Gastrocnemius medialis (tissue), 4 donors: ENCODE measurements at regions of chr3 and their contacts with region 1.

Region 1: GRCh38 chr3:121592856-121593702 is at the start of gene FBXO40:
- DNase-seq: peak; percentile 79 to 91
- ATAC-seq: peak; percentile 88 to 90
- H3K4me3 ChIP-seq: peak within 1 kb of the TSS; percentile 47 to 53 (median 52)
- H3K27ac ChIP-seq: peak within 1 kb of the TSS; percentile 87 to 95 (median 94)
- H3K4me1 ChIP-seq: peaks cover 39 to 40% of the 10 kb centered on the region in 2 donors
- H3K27me3 ChIP-seq: no peaks in the 10 kb centered on the region
- CTCF ChIP-seq: no peak
- POLR2A ChIP-seq: peak; percentile 27 to 72
- total RNA-seq, gene FBXO40: 7.2 to 40.8 (median 28.7) TPM

Region 2: DNA sequence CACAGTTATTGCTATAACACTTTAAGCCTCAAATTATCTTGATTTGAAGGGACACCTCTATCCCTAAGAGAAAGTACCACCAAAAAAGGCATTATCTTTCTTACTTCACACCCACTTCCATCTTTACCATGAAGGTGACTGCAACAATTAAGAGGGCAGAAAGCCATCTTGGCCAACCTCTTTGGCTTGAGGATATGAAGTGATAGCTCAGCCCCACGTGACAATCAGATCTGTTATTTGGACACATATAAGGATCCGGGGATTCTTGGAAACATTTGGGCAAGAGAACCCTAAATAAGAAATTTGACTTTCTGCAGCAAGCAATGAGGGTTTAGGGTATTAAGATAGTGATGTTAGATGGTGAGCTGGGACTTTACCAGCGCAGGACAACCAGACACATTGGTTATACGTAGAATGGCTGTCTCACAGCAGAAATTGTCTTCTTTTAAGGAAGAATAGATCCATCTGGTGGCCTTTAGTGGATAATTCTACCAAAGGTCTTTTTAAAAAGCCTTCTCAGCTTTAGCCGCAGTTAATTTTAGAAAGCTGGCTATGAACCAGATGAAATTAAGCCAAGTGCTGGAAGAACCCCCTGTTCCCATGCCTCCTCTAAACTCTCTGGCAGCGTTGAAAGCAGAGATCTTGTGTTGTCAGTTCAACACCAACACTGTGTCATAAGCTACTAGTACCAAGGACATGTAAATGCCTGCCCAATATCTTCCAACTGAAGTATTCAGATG is 55.3 kb after region 1 on chr3:
- in situ Hi-C with region 1: no loop called
- intact Hi-C with region 1: loop called (anchors 2 kb)
- DNase-seq: peak; percentile 66 to 74
- ATAC-seq: peak; percentile 99
- H3K4me3 ChIP-seq: peak overlapping the region in 2 of 4 donors; percentile 16 to 21
- H3K27ac ChIP-seq: peak overlapping the region; percentile 83 to 87 (median 84)
- H3K4me1 ChIP-seq: peaks cover 17 to 21% of the 10 kb centered on the region in 2 donors
- H3K27me3 ChIP-seq: no peaks in the 10 kb centered on the region
- CTCF ChIP-seq: peak in 2 of 5 experiments; percentile 13 to 19
- POLR2A ChIP-seq: no peak

Region 3: DNA sequence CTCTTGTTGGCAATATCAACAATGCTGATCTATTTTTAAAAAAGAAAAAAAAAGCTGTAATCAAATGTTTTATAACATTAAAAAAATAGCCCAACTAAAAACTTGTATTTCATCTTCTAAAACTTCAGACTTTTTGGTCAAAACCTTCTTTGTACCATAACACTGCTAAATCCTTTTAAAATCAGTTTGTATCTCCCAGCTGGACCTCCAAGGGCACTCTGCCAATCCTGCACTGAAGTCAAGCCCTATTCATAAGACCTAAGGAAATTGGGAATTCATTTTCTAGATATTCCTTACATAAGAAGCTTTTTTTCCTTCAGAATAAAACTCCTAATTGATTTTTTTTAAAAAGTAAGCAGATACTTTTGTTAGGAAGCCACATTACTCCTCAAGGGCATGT is 105.8 kb after region 1 on chr3:
- in situ Hi-C with region 1: no loop called
- intact Hi-C with region 1: no loop called
- DNase-seq: no peak
- ATAC-seq: no peak
- H3K4me3 ChIP-seq: no peak overlapping the region
- H3K27ac ChIP-seq: peak overlapping the region in 1 of 4 donors; percentile 11
- H3K4me1 ChIP-seq: peaks cover 10 to 19% of the 10 kb centered on the region in 2 donors
- H3K27me3 ChIP-seq: no peaks in the 10 kb centered on the region
- CTCF ChIP-seq: no peak
- POLR2A ChIP-seq: no peak

Region 4: DNA sequence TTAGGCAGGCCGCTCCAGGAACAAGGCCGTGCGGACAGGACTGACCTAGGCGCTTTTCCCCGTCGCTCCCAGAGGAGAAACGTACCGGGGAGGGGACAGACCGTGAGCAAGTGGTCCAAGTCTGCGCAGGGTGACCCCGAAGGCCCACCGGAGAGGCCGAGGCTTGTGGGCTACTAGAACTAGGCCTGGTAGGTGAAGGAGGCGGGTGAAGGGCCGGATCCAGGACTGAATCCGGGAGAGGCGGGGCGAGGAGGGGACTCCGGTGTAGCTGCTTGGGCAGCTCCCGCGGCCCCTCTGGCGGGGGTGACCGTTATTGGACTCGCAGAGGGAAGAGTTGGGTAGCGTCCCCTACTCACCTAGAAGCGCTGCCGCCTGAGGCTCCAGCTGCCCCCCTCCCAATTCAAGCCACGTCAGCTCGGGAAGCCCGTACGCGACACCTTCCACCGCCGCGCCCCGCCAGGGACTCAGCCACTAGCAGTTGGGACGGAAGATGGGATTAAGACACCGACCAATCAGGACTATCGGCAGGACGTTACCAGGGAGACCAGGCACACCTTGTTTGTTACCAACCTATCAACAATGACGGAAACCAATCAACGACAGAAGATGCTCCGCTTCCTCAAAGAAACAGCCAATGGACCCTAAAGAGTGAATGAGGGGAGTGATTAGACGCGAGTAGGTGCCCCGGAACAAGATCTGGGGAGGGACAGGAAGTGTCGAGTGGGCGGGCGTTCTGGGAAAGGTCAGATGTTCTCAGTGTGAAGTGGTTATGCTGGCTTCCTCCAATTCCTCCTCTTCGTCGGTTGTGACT is 156.4 kb after region 1 on chr3 and contains the start of gene GOLGB1:
- in situ Hi-C with region 1: no loop called
- intact Hi-C with region 1: loop called (anchors 5 kb)
- DNase-seq: peak; percentile 96 to 97
- ATAC-seq: peak; percentile 98 to 100
- H3K4me3 ChIP-seq: peak within 1 kb of the TSS; percentile 68 to 95 (median 92)
- H3K27ac ChIP-seq: peak within 1 kb of the TSS; percentile 86 to 93 (median 89)
- H3K4me1 ChIP-seq: peaks cover 24 to 28% of the 10 kb centered on the region in 2 donors
- H3K27me3 ChIP-seq: peaks cover 0 to 2% (median 0%) of the 10 kb centered on the region in 3 donors
- CTCF ChIP-seq: peak in 1 of 5 experiments; percentile 12
- POLR2A ChIP-seq: peak; percentile 98
- total RNA-seq, gene GOLGB1: 18.1 to 31.6 (median 26.7) TPM

Region 5: GRCh38 chr3:121834696-121835464 is 241.8 kb after region 1 on chr3 and contains the starts of genes EAF2 and IQCB1:
- in situ Hi-C with region 1: no loop called
- intact Hi-C with region 1: loop called (anchors 1 kb)
- DNase-seq: peak; percentile 92 to 94
- ATAC-seq: peak; percentile 98 to 99
- H3K4me3 ChIP-seq: peak within 1 kb of the TSS; percentile 73 to 96 (median 77)
- H3K27ac ChIP-seq: peak within 1 kb of the TSS; percentile 80 to 91 (median 88)
- H3K4me1 ChIP-seq: peaks cover 13 to 22% of the 10 kb centered on the region in 2 donors
- H3K27me3 ChIP-seq: no peaks in the 10 kb centered on the region
- CTCF ChIP-seq: no peak
- POLR2A ChIP-seq: peak; percentile 79 to 92
- total RNA-seq, gene EAF2: 2.6 to 5.7 (median 3.6) TPM
- total RNA-seq, gene IQCB1: 8.8 to 14.0 (median 11.8) TPM

Region 6: GRCh38 chr3:122793568-122794416 is 1200.7 kb after region 1 on chr3 and contains the start of gene HSPBAP1:
- in situ Hi-C with region 1: no loop called
- intact Hi-C with region 1: loop called (anchors 10 kb)
- DNase-seq: peak; percentile 94 to 96
- ATAC-seq: peak; percentile 76 to 84
- H3K4me3 ChIP-seq: peak within 1 kb of the TSS; percentile 74 to 90 (median 78)
- H3K27ac ChIP-seq: peak within 1 kb of the TSS; percentile 95 to 99 (median 96)
- H3K4me1 ChIP-seq: peaks cover 55 to 56% of the 10 kb centered on the region in 2 donors
- H3K27me3 ChIP-seq: no peaks in the 10 kb centered on the region
- CTCF ChIP-seq: peak in 2 of 5 experiments; percentile 39 to 50
- POLR2A ChIP-seq: peak; percentile 96
- total RNA-seq, gene HSPBAP1: 14.5 to 30.7 (median 17.0) TPM